ENCODE measurements at regions of chr6 and their contacts with region 1.

Region 1: GRCh38 chr6:99588618-99589289 is 17.9 kb upstream of the PRDM13 start:
- DNase-seq: peak; percentile 76 to 81
- H3K4me3 ChIP-seq: peak overlapping the region; percentile 42
- H3K4me3 Mint-ChIP-seq: peak overlapping the region; percentile 84
- H3K27ac Mint-ChIP-seq: no peak overlapping the region
- H3K4me1 ChIP-seq: no peaks in the 10 kb centered on the region
- H3K4me1 Mint-ChIP-seq: no peaks in the 10 kb centered on the region
- H3K27me3 ChIP-seq: peaks cover 2% of the 10 kb centered on the region; the same call in 1 of the 2 replicates
- H3K27me3 Mint-ChIP-seq: peaks cover 23% of the 10 kb centered on the region
- CTCF ChIP-seq: peak; percentile 33 to 67

Region 2: GRCh38 chr6:99467509-99468106 is 121.1 kb before region 1 on chr6:
- CTCF ChIA-PET with region 1: no interaction called
- POLR2A ChIA-PET with region 1: no interaction called
- intact Hi-C with region 1: loop called (anchors 1 kb)
- DNase-seq: no peak
- H3K4me3 ChIP-seq: no peak overlapping the region
- H3K4me3 Mint-ChIP-seq: no peak overlapping the region
- H3K27ac Mint-ChIP-seq: no peak overlapping the region
- H3K4me1 ChIP-seq: no peaks in the 10 kb centered on the region
- H3K4me1 Mint-ChIP-seq: no peaks in the 10 kb centered on the region
- H3K27me3 ChIP-seq: no peaks in the 10 kb centered on the region
- H3K27me3 Mint-ChIP-seq: no peaks in the 10 kb centered on the region
- CTCF ChIP-seq: peak; percentile 60 to 61

Region 3: DNA sequence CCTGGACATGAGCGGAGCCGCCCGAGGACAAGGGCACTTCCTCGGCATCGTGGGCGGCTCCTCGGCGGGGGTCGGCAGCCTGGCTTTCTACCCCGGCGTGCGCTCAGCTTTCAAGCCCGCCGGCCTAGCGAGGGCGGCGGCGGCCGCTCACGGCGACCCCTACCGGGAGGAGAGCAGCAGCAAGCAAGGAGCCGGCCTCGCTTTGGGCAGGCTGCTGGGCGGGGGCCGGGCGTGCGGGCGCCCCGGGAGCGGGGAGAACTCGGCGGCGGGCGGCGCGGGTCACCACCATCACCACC is 24.6 kb after region 1 on chr6:
- CTCF ChIA-PET with region 1: no interaction called
- POLR2A ChIA-PET with region 1: no interaction called
- intact Hi-C with region 1: loop called (anchors 2 kb)
- DNase-seq: peak in 1 of 2 experiments; percentile 44
- H3K4me3 ChIP-seq: peak overlapping the region; percentile 71
- H3K4me3 Mint-ChIP-seq: peak overlapping the region; percentile 83
- H3K27ac Mint-ChIP-seq: no peak overlapping the region
- H3K4me1 ChIP-seq: no peaks in the 10 kb centered on the region
- H3K4me1 Mint-ChIP-seq: no peaks in the 10 kb centered on the region
- H3K27me3 ChIP-seq: peaks cover 2% of the 10 kb centered on the region; the same call in 1 of the 2 replicates
- H3K27me3 Mint-ChIP-seq: peaks cover 18% of the 10 kb centered on the region
- CTCF ChIP-seq: no peak

Region 4: DNA sequence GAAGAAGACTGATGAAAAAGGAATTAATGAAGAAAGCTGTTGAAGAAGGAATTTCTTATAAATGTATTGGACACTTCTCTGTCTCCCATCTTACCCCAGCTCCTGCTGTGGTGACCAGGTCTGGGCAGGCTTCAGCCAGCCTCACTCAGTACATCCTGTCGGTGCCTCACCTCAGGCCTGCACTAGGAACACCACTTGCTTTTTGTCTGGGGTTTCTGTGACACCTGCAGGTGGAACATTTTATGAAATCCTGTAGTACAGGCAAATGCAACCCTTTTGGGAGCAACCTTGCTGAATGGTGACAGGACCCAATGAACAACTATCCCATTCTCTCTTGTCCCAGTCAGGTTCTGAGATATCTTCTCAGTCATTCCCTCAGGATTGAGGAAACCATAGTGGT is 147.5 kb after region 1 on chr6:
- CTCF ChIA-PET with region 1: no interaction called
- POLR2A ChIA-PET with region 1: no interaction called
- intact Hi-C with region 1: loop called (anchors 1 kb)
- DNase-seq: peak in 1 of 2 experiments; percentile 7
- H3K4me3 ChIP-seq: no peak overlapping the region
- H3K4me3 Mint-ChIP-seq: no peak overlapping the region
- H3K27ac Mint-ChIP-seq: no peak overlapping the region
- H3K4me1 ChIP-seq: no peaks in the 10 kb centered on the region
- H3K4me1 Mint-ChIP-seq: no peaks in the 10 kb centered on the region
- H3K27me3 ChIP-seq: no peaks in the 10 kb centered on the region
- H3K27me3 Mint-ChIP-seq: peaks cover 13% of the 10 kb centered on the region
- CTCF ChIP-seq: no peak

Region 5: DNA sequence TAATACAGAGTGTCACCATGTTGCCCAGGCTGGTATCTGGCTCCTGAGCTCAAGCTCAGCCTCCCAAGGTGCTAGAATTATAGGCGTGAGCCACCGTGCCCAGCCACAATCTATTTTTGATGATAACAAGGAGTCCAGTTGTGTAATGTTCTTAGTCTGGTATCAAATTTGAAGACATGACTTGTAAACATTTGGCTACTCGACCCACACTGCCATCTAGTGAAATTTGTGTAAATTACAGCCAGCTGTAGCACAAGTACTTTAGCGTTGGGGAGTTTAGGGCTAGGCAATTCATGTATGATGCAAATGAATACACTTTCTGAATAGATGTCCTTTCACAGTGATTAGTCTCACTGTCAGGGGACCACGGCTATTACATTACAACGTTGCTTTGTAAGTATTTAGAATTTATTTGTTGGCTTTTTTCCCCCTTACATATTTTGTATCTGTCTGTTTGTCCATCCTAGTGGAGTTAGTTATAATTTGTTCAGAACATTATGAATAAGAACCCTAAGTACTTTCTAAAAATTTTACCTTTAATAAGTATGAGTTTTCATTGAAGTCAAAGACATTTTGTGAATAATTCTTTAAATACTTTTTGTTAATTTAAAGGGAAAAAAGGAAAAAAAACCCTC is 157.6 kb after region 1 on chr6:
- CTCF ChIA-PET with region 1: interaction called, 4 read pairs
- POLR2A ChIA-PET with region 1: no interaction called
- intact Hi-C with region 1: loop called (anchors 1 kb)
- DNase-seq: peak; percentile 51 to 71
- H3K4me3 ChIP-seq: no peak overlapping the region
- H3K4me3 Mint-ChIP-seq: no peak overlapping the region
- H3K27ac Mint-ChIP-seq: no peak overlapping the region
- H3K4me1 ChIP-seq: no peaks in the 10 kb centered on the region
- H3K4me1 Mint-ChIP-seq: no peaks in the 10 kb centered on the region
- H3K27me3 ChIP-seq: no peaks in the 10 kb centered on the region
- H3K27me3 Mint-ChIP-seq: peaks cover 18% of the 10 kb centered on the region
- CTCF ChIP-seq: peak; percentile 63 to 64

Measured in Caco-2 (cell line).